PC-9 (cell line): ENCODE measurements at regions of chr1 and their contacts with region 1.

Region 1: GRCh38 chr1:24070821-24071393 is 41.0 kb downstream of the MYOM3 start:
- DNase-seq: peak; percentile 57 to 76
- H3K4me3 ChIP-seq: no peak overlapping the region
- H3K27ac ChIP-seq: no peak overlapping the region
- H3K4me1 ChIP-seq: no peaks in the 10 kb centered on the region
- H3K27me3 ChIP-seq: no peaks in the 10 kb centered on the region
- CTCF ChIP-seq: peak; percentile 88

Region 2: GRCh38 chr1:24085546-24085945 is 14.6 kb after region 1 on chr1:
- CTCF ChIA-PET with region 1: no interaction called
- POLR2A ChIA-PET with region 1: no interaction called
- intact Hi-C with region 1: no loop called
- DNase-seq: no peak
- H3K4me3 ChIP-seq: no peak overlapping the region
- H3K27ac ChIP-seq: no peak overlapping the region
- H3K4me1 ChIP-seq: no peaks in the 10 kb centered on the region
- H3K27me3 ChIP-seq: no peaks in the 10 kb centered on the region
- CTCF ChIP-seq: no peak

Region 3: DNA sequence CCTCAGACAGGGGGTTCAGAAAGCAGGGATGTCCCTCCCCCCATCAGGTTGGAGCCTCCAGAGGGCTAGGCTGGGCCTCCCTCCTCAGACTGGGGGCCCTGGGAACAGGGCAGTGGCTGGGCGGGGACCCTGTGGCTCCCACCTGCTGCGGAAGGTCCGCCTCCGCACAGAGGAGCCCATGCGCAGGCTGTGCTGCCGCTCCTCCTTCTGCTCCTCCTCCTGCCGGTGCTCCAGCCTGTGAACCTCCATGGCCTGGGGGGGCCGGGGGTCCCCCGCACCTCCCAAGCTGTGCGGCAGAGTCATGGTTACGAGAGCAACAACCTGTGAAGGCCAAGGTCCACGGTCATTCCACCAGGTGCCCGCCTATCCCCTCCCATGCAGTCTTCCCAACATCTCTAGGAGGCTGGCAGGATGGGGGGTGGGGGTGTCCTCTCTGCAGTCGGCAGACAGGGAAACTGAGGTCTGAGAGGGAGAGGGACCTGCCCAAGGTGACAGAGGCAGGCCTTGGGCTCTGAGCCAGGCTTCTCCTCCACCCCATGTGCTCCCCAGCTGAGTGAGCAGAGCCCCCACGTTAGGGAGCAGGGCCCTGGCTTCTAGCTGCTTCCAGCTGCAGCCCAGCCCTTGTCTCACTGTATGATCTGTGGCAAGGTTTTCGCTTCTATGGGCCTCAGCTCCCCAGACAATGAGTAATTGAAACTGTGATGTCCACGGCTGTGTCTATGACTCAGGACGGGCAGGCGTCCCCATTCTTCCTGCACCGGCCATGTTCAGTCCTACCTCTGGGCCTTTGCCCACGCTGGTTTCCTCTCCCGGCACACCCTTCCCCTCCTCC is 37.6 kb after region 1 on chr1:
- CTCF ChIA-PET with region 1: no interaction called
- POLR2A ChIA-PET with region 1: no interaction called
- intact Hi-C with region 1: loop called (anchors 5 kb)
- DNase-seq: peak; percentile 60 to 65
- H3K4me3 ChIP-seq: no peak overlapping the region
- H3K27ac ChIP-seq: no peak overlapping the region
- H3K4me1 ChIP-seq: peaks cover 4% of the 10 kb centered on the region; the same call in 1 of the 2 replicates
- H3K27me3 ChIP-seq: no peaks in the 10 kb centered on the region
- CTCF ChIP-seq: no peak

Region 4: DNA sequence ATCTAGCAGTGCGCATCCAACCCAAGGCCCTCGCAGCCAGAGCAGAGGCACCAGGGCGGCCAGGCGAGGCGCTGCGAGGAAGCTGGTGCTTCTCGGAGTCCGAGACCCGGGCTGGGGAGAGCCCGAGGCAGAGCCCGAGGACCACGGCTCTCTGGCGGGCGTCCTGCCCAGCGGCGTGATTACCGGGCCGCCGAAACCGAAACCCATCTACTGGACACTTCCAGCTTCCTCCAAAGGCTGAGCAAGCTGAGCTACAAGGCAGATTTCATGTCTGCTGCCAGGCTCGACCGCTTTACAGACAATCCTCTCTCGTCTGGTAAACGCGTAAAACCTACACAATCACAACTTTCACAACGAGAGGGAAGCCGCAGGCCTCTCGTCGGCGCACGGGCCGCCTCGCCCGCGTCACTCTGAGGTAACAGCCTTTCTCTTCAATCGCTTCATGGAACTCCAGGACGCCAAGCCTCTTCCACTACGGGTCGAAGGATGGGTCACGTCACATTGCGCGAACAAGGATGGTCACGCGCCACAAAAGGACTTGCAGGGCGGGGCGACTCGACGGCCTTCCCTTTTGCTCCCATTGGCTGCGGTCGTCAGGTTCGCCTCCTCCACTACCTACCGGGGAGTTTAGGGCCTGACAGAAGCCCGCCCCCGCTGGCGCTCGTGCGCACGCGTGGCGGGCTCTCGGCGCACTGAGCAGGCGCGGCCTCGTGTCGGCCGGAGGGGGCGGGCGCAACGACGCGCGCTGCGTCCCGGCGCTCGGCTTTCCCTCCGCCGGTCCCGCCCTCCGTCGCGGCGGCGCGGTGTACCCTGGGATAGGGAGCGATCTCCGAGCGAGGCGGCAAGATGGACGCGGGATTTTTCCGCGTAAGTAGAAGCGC is 571.8 kb after region 1 on chr1 and contains the start of gene SRRM1:
- CTCF ChIA-PET with region 1: no interaction called
- POLR2A ChIA-PET with region 1: no interaction called
- intact Hi-C with region 1: no loop called
- DNase-seq: peak; percentile 94 to 97
- H3K4me3 ChIP-seq: peak within 1 kb of the TSS; percentile 70
- H3K27ac ChIP-seq: peak within 1 kb of the TSS; percentile 96
- H3K4me1 ChIP-seq: peaks cover 15% of the 10 kb centered on the region
- H3K27me3 ChIP-seq: no peaks in the 10 kb centered on the region
- CTCF ChIP-seq: no peak
- total RNA-seq, gene SRRM1: 111 and 124 TPM in 2 replicates